Activated T-helper 1 cell treated with anti-CD3 and anti-CD28 coated beads, Interleukin-12 subunit alpha, Interleukin-12 subunit beta, Interleukin-2, Interleukin-4 antibody, amounts not matched to agents 30 ng/mL and 10 ng/mL and 1 ng/mL, durations not matched to agents 14 hours and 24 hours and 36 hours (primary cell): ENCODE measurements at regions of chr1 and their contacts with region 1.

Region 1: DNA sequence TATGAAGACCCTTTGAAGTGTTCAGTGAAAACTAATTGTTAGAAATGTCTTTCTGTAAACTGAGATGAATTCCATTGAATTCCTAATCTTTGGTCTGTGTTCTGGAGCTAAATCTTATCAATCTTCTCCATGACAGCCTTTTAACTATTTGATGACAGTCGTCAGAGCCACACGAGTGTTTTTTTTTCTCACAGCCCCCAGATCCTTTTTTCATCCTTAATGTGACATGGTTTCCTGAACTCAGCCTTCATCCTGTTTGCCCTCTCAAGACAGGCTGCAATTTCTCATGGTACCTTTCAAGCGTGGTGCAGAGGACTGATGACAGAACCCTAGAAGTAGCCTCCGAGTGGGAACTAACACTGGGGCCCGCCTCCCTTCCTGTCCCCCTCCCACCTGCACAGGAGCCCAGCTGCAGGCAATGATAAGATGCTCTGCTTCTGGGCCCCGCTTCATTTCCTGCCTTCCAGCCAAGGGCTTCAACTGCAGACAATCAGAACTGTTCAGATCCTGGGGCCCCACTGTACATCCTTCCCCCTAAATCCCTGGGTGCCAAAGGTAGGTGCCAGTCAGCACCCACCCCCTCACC is 114.6 kb upstream of the VAV3 start:
- DNase-seq: peak; percentile 24
- H3K4me3 Mint-ChIP-seq: peak overlapping the region; percentile 32
- H3K27ac Mint-ChIP-seq: peak overlapping the region; percentile 56
- H3K4me1 Mint-ChIP-seq: peaks cover 64% of the 10 kb centered on the region
- H3K27me3 Mint-ChIP-seq: no peaks in the 10 kb centered on the region

Region 2: GRCh38 chr1:106944722-106945121 is 1134.8 kb before region 1 on chr1:
- intact Hi-C with region 1: no loop called
- DNase-seq: no peak
- H3K4me3 Mint-ChIP-seq: no peak overlapping the region
- H3K27ac Mint-ChIP-seq: no peak overlapping the region
- H3K4me1 Mint-ChIP-seq: no peaks in the 10 kb centered on the region
- H3K27me3 Mint-ChIP-seq: no peaks in the 10 kb centered on the region

Region 3: GRCh38 chr1:108053270-108054013 is 26.1 kb before region 1 on chr1:
- intact Hi-C with region 1: loop called (anchors 1 kb)
- DNase-seq: no peak
- H3K4me3 Mint-ChIP-seq: no peak overlapping the region
- H3K27ac Mint-ChIP-seq: no peak overlapping the region
- H3K4me1 Mint-ChIP-seq: peaks cover 6% of the 10 kb centered on the region
- H3K27me3 Mint-ChIP-seq: no peaks in the 10 kb centered on the region

Region 4: DNA sequence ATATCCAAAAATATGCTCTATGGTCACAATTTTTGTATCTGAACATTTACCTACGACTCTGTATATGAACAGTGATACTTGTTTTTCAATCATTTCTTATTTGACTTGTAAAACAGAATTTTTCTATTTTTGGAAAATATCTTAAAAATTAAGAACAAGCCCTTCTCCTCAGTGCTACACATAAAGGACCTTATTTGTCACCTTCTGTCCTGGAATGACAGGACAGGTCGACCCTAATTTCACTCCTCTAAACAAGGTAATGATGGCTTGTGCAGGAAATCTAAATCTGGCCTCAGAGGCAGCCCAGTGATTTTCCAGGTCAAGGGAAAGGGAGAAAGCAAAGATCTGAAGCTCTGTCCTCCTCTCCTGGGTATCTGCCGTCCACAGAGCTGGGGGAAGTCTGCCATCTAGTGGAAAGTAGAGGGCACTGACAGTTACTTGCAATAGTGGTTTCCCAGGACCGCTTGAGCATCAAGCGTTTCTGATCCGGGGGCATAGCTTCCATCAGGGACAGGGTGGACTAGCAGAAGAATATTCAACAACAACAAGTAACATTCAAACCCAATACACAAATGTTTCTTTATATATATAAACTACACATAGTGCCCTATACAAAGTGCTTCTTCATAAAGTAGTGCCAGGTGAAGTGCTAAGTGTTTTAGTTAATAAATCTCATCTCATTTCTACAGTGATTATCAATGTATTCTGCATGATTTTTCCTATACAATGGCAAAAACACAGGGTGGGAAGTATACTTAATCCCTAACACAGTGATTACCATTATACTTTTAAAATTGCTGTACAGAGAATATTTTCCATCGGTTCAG is 46.0 kb after region 1 on chr1:
- intact Hi-C with region 1: loop called (anchors 2 kb)
- DNase-seq: peak; percentile 40
- H3K4me3 Mint-ChIP-seq: no peak overlapping the region
- H3K27ac Mint-ChIP-seq: no peak overlapping the region
- H3K4me1 Mint-ChIP-seq: no peaks in the 10 kb centered on the region
- H3K27me3 Mint-ChIP-seq: peaks cover 3% of the 10 kb centered on the region

Region 5: DNA sequence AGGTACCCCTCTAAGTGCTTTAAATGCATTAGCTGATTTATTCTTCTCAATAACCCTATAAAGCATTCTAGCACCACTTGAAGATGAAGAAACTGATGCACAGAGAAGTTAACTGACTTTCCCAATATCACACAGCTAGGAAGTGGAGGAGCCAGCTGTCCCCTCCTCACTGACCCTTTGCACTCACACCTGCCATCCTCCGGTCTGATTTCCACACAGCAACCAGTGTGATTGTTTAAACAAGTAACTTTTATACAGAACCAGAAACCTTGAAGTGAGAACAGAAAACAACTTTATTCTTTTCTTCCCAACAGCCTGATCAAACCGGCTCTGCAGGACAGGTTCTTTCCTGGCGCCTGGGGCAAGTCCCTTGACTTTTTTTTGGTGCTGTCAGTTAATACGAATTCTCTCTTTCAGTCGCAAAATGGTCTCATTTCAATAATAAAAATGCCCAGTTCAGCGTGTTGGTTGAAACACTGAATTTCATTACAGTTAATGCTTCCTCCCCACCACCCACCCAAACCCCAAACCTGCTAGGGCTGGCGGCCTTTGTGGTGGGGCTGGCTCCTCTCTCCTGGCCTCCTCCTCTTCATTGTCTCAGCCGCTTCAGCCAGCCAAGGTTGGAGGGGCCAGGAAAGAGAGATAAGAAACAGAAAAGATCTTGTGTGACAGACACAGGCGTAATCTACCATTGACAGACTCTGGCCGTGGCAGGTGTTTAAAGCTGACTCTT is 454.0 kb after region 1 on chr1:
- intact Hi-C with region 1: no loop called
- DNase-seq: no peak
- H3K4me3 Mint-ChIP-seq: no peak overlapping the region
- H3K27ac Mint-ChIP-seq: no peak overlapping the region
- H3K4me1 Mint-ChIP-seq: no peaks in the 10 kb centered on the region
- H3K27me3 Mint-ChIP-seq: peaks cover 12% of the 10 kb centered on the region

Region 6: DNA sequence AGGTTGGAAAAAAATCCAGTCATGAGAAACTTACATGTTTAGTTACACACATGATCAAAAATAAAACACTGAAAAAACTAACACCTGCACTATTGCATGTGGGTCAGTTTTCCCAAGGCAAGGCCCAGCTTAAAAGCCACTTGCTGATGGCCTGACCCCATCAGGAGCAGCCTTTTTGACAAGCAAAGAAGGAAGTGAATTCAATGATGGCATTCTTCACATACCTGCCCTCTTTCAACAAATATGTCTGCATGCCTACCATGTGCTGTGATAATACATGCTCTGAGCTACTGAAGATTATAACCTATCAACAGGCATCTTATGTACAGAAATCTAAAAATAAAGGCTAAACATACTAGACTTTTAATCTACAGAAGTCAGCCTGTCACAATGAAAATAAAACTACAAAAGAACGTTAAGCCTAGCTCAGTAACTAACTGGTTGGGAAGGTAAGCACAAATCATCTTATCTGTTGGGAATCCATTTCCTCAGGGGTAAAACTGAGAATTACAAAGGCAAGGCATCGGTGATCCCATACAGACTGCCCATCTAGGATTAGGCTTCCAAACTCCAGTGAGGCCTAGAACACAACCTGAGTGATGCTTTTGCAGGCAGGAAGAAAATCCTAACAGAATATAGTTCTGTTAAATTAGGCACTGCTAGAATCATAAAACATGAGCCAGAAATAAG is 1303.7 kb after region 1 on chr1:
- intact Hi-C with region 1: loop called (anchors 5 kb)
- DNase-seq: no peak
- H3K4me3 Mint-ChIP-seq: no peak overlapping the region
- H3K27ac Mint-ChIP-seq: no peak overlapping the region
- H3K4me1 Mint-ChIP-seq: no peaks in the 10 kb centered on the region
- H3K27me3 Mint-ChIP-seq: no peaks in the 10 kb centered on the region